Gastrocnemius medialis (tissue), 4 donors: ENCODE measurements at regions of chr9 and their contacts with region 1.

Region 1: GRCh38 chr9:129080602-129081387 is at the start of gene DOLPP1:
- DNase-seq: peak; percentile 99
- ATAC-seq: peak; percentile 92 to 94
- H3K4me3 ChIP-seq: peak within 1 kb of the TSS; percentile 77 to 89 (median 82)
- H3K27ac ChIP-seq: peak within 1 kb of the TSS; percentile 84 to 96 (median 93)
- H3K4me1 ChIP-seq: peaks cover 10 to 19% of the 10 kb centered on the region in 2 donors
- H3K27me3 ChIP-seq: no peaks in the 10 kb centered on the region
- CTCF ChIP-seq: no peak
- POLR2A ChIP-seq: peak; percentile 83 to 85
- total RNA-seq, gene DOLPP1: 1.6 to 4.7 (median 2.8) TPM

Region 2: DNA sequence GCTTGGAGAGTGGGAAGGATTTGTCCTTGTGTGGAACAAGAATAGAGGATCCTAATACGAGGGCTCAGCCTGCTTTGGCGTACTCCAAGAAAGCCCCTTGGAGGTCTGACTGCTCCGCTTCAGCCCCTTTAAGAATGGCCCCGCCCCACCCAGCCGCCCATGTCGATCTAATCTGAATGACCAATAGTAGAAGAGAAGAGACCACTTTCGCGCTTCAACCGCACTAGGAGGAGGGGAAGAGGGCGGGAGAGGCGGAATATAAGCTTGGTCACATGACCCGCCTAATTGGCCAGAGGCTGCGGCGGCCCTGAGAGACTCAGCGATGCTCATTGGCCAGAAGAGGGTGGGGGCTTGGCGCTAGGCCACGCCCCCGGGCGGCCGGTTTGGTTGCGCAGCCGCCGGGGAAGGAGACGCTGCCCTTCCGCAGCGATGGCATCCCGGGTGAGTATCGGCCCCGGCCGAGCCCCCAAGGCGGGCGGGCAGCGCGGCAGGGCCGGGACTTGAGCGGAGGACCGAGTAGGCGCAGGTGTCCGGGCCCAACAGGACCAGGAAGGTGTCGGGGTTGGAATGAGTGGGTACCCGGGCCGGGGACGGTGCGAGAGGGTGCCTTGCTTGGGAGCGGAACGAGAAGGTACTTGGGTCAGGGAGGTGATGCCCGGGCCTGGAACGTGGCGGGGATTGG is 44.4 kb before region 1 on chr9 and contains the start of gene MIGA2:
- in situ Hi-C with region 1: no loop called
- intact Hi-C with region 1: loop called (anchors 5 kb)
- DNase-seq: peak; percentile 98 to 99
- ATAC-seq: peak; percentile 99
- H3K4me3 ChIP-seq: peak within 1 kb of the TSS; percentile 85 to 99 (median 92)
- H3K27ac ChIP-seq: peak within 1 kb of the TSS; percentile 79 to 94 (median 87)
- H3K4me1 ChIP-seq: peaks cover 18 to 21% of the 10 kb centered on the region in 2 donors
- H3K27me3 ChIP-seq: no peaks in the 10 kb centered on the region
- CTCF ChIP-seq: peak in 2 of 5 experiments; percentile 14 to 24
- POLR2A ChIP-seq: peak; percentile 89 to 91
- total RNA-seq, gene MIGA2: 5.8 to 20.6 (median 18.1) TPM

Region 3: GRCh38 chr9:129110740-129111527 is 30.1 kb after region 1 on chr9 and contains the starts of genes CRAT and PTPA:
- in situ Hi-C with region 1: no loop called
- intact Hi-C with region 1: loop called (anchors 2 kb)
- DNase-seq: peak; percentile 98
- ATAC-seq: peak; percentile 78 to 84
- H3K4me3 ChIP-seq: peak within 1 kb of the TSS; percentile 68 to 99 (median 91)
- H3K27ac ChIP-seq: peak within 1 kb of the TSS; percentile 92 to 99 (median 96)
- H3K4me1 ChIP-seq: peaks cover 55 to 60% of the 10 kb centered on the region in 2 donors
- H3K27me3 ChIP-seq: no peaks in the 10 kb centered on the region
- CTCF ChIP-seq: peak in 1 of 5 experiments; percentile 12
- POLR2A ChIP-seq: peak; percentile 97 to 99
- total RNA-seq, gene CRAT: 137 to 167 (median 144) TPM
- total RNA-seq, gene PTPA: 37.6 to 71.6 (median 53.5) TPM